Heart left ventricle (tissue), 16 donors: ENCODE measurements at regions of chr1 and their contacts with region 1.

Region 1: DNA sequence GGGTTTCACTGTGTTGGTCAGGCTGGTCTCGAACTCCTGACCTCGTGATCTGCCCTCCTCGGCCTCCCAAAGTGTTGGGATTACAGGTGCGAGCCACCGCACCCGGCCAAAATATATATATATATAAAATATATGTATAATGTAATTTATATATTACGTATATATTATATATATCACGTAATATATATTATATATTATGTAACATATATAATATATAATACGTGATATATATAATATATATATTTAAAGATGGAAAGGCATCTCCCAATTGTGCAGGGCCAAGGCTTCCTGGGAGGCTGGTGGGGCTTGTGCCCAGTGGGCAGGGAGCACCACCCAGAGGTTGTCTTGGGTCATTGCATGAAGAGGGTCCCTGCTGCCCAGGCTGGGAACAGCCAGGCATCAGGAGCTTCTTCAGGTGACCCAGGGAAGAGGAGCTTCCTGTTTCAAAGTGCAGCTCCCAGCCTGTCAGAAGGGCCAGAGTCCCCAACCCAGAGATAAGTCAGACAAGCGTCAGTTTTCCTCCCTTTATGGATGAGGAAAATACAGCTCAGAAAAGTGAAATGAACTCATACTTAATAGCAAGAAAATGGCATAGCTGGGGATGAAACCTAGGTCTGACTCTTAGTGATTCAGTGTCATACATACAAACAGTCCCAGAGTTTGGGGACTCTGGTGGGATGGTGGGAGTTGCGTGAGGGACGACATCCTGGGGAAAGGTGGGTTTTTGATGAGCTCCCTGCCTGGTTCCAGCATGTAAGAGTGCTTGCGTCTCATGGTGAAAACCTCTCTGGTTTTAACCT is 12.0 kb downstream of the UBE2Q1 start:
- DNase-seq: peak; percentile 51 to 72 (median 56)
- ATAC-seq: peak in 3 of 4 donors; percentile 71 to 80 (median 74)
- H3K4me3 ChIP-seq: no peak overlapping the region
- H3K27ac ChIP-seq: no peak overlapping the region
- H3K4me1 ChIP-seq: peaks cover 0 to 28% (median 13%) of the 10 kb centered on the region in 12 donors
- H3K27me3 ChIP-seq: no peaks in the 10 kb centered on the region
- CTCF ChIP-seq: peak; percentile 71 to 85 (median 78)
- POLR2A ChIP-seq: no peak

Region 2: GRCh38 chr1:154335025-154335714 is 211.3 kb before region 1 on chr1:
- intact Hi-C with region 1: loop called in 2 of 10 experiments (anchors 10 kb)
- DNase-seq: peak; percentile 76 to 91 (median 82)
- ATAC-seq: peak; percentile 52 to 75 (median 73)
- H3K4me3 ChIP-seq: no peak overlapping the region
- H3K27ac ChIP-seq: peak overlapping the region in 7 of 12 donors; percentile 20 to 68 (median 34)
- H3K4me1 ChIP-seq: peaks cover 0 to 36% (median 8%) of the 10 kb centered on the region in 12 donors
- H3K27me3 ChIP-seq: no peaks in the 10 kb centered on the region
- CTCF ChIP-seq: peak; percentile 78 to 94 (median 90)
- POLR2A ChIP-seq: no peak

Region 3: GRCh38 chr1:154352581-154353459 is 193.6 kb before region 1 on chr1:
- intact Hi-C with region 1: loop called in 1 of 10 experiments (anchors 10 kb)
- DNase-seq: peak; percentile 34 to 70 (median 44)
- ATAC-seq: peak; percentile 44 to 65 (median 58)
- H3K4me3 ChIP-seq: peak overlapping the region; percentile 29 to 57 (median 48)
- H3K27ac ChIP-seq: peak overlapping the region in 9 of 12 donors; percentile 15 to 72 (median 47)
- H3K4me1 ChIP-seq: peaks cover 0 to 29% (median 13%) of the 10 kb centered on the region in 12 donors
- H3K27me3 ChIP-seq: no peaks in the 10 kb centered on the region
- CTCF ChIP-seq: no peak
- POLR2A ChIP-seq: no peak